ENCODE measurements at regions of chrX and their contacts with region 1.

Region 1: DNA sequence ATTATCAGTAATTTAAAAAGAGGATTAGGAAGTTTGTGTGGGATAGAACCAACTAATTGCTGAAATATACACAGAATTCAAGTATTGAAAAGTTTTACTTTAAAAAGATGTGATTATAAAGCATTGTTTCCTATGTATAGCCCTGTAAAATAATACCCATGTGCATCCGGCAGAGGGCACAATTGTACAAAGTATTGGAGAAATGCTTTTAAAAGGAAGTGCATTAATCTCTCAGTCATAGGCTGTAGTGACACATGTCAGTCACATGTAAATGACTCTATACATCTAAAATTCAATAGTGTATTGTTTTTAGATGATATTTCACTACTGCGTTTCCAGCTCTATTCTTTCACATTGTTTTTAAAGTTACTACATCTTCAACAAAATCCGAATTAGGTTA is 9.7 kb upstream of the GEMIN8 start:
- DNase-seq: peak; percentile 59
- H3K4me3 ChIP-seq: no peak overlapping the region
- H3K27ac ChIP-seq: no peak overlapping the region
- H3K4me1 ChIP-seq: no peaks in the 10 kb centered on the region
- CTCF ChIP-seq: peak; percentile 80

Region 2: GRCh38 chrX:14528629-14529289 is 489.4 kb after region 1 on chrX:
- CTCF ChIA-PET with region 1: no interaction called
- POLR2A ChIA-PET with region 1: no interaction called
- intact Hi-C with region 1: loop called (anchors 1 kb)
- DNase-seq: peak; percentile 17
- H3K4me3 ChIP-seq: no peak overlapping the region
- H3K27ac ChIP-seq: no peak overlapping the region
- H3K4me1 ChIP-seq: no peaks in the 10 kb centered on the region
- CTCF ChIP-seq: peak; percentile 70

Region 3: GRCh38 chrX:15242899-15243555 is 1203.7 kb after region 1 on chrX:
- CTCF ChIA-PET with region 1: no interaction called
- POLR2A ChIA-PET with region 1: no interaction called
- intact Hi-C with region 1: loop called (anchors 2 kb)
- DNase-seq: peak; percentile 20
- H3K4me3 ChIP-seq: no peak overlapping the region
- H3K27ac ChIP-seq: no peak overlapping the region
- H3K4me1 ChIP-seq: no peaks in the 10 kb centered on the region
- CTCF ChIP-seq: peak; percentile 74

Measured in OCI-LY7 (cell line).